Naive thymus-derived CD4-positive, alpha-beta T cell (primary cell): ENCODE measurements at regions of chr9 and their contacts with region 1.

Region 1: DNA sequence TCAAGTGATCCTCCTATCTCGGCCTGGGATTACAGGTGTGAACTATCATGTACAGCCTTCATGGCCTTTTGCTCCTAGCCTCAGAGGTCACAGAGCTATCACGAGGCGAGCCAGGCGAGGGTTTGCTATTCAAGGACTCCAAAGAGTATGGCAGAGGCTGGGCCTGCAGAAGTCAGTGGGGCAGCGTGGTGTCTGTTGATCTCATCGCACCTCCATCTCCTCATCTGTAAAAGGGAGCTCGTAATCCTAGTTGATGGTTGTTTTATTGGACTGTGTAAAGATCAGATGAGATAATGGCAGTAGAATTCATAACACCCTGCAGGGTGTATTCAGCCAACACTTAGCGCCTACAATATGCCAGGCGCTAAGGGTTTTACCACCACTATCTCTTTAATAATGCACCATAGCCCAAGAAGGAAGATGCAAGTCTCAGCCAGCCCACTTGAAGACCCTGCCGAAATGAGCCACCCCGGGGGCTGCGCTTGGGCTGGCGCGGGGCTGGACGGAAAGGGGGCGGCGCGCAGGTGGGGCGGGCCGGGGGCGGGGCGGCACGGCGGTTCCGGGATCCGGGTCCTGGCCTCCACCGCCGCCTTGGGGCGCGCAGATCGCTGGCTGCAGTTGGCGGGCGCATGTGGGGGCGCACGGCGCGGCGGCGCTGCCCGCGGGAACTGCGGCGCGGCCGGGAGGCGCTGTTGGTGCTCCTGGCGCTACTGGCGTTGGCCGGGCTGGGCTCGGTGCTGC is at the start of gene GALNT12:
- DNase-seq: peak; percentile 31 to 60 (median 48)
- ATAC-seq: peak; percentile 87
- H3K4me3 ChIP-seq: peak within 1 kb of the TSS; percentile 56
- H3K4me3 Mint-ChIP-seq: peak within 1 kb of the TSS; percentile 80 to 95 (median 92)
- H3K27ac ChIP-seq: peak within 1 kb of the TSS; percentile 12
- H3K27ac Mint-ChIP-seq: peak within 1 kb of the TSS; percentile 7 to 91 (median 71)
- H3K4me1 ChIP-seq: peaks cover 11 to 16% of the 10 kb centered on the region in 2 donors
- H3K4me1 Mint-ChIP-seq: peaks cover 15 to 42% (median 37%) of the 10 kb centered on the region in 7 donors
- H3K27me3 ChIP-seq: no peaks in the 10 kb centered on the region
- H3K27me3 Mint-ChIP-seq: peaks cover 0 to 52% (median 0%) of the 10 kb centered on the region in 5 donors
- total RNA-seq, gene GALNT12: 6.2 to 14.3 (median 11.4) TPM

Region 2: GRCh38 chr9:97890038-97890437 is 917.2 kb before region 1 on chr9:
- CTCF ChIA-PET with region 1: no interaction called
- POLR2A ChIA-PET with region 1: no interaction called
- intact Hi-C with region 1: no loop called
- DNase-seq: peak; percentile 40 to 73 (median 57)
- ATAC-seq: peak; percentile 88
- H3K4me3 ChIP-seq: no peak overlapping the region
- H3K4me3 Mint-ChIP-seq: peak overlapping the region in 1 of 10 donors; percentile 51
- H3K27ac ChIP-seq: no peak overlapping the region
- H3K27ac Mint-ChIP-seq: peak overlapping the region in 5 of 9 donors; percentile 28 to 81 (median 68)
- H3K4me1 ChIP-seq: peaks cover 0 to 4% of the 10 kb centered on the region in 2 donors
- H3K4me1 Mint-ChIP-seq: peaks cover 6 to 23% (median 18%) of the 10 kb centered on the region in 7 donors
- H3K27me3 ChIP-seq: no peaks in the 10 kb centered on the region
- H3K27me3 Mint-ChIP-seq: no peaks in the 10 kb centered on the region

Region 3: GRCh38 chr9:98766586-98766985 is 40.7 kb before region 1 on chr9:
- CTCF ChIA-PET with region 1: no interaction called
- POLR2A ChIA-PET with region 1: no interaction called
- intact Hi-C with region 1: no loop called
- DNase-seq: peak in 1 of 9 donors; percentile 2
- ATAC-seq: peak; percentile 26
- H3K4me3 ChIP-seq: no peak overlapping the region
- H3K4me3 Mint-ChIP-seq: no peak overlapping the region
- H3K27ac ChIP-seq: no peak overlapping the region
- H3K27ac Mint-ChIP-seq: no peak overlapping the region
- H3K4me1 ChIP-seq: no peaks in the 10 kb centered on the region
- H3K4me1 Mint-ChIP-seq: no peaks in the 10 kb centered on the region
- H3K27me3 ChIP-seq: no peaks in the 10 kb centered on the region
- H3K27me3 Mint-ChIP-seq: no peaks in the 10 kb centered on the region

Region 4: GRCh38 chr9:98796364-98797101 is 10.7 kb before region 1 on chr9 and contains the start of gene ANKS6:
- CTCF ChIA-PET with region 1: interaction called, 4 read pairs
- POLR2A ChIA-PET with region 1: interaction called, 8 read pairs
- intact Hi-C with region 1: loop called (anchors 1 kb)
- DNase-seq: peak; percentile 67 to 95 (median 84)
- ATAC-seq: peak; percentile 98
- H3K4me3 ChIP-seq: peak within 1 kb of the TSS; percentile 87
- H3K4me3 Mint-ChIP-seq: peak within 1 kb of the TSS; percentile 87 to 94 (median 90)
- H3K27ac ChIP-seq: peak within 1 kb of the TSS; percentile 74
- H3K27ac Mint-ChIP-seq: peak within 1 kb of the TSS; percentile 63 to 90 (median 87)
- H3K4me1 ChIP-seq: peaks cover 6 to 12% of the 10 kb centered on the region in 2 donors
- H3K4me1 Mint-ChIP-seq: peaks cover 21 to 37% (median 32%) of the 10 kb centered on the region in 7 donors
- H3K27me3 ChIP-seq: no peaks in the 10 kb centered on the region
- H3K27me3 Mint-ChIP-seq: peaks cover 0 to 23% (median 0%) of the 10 kb centered on the region in 5 donors
- total RNA-seq, gene ANKS6: 8.1 to 18.4 (median 13.5) TPM

Region 5: DNA sequence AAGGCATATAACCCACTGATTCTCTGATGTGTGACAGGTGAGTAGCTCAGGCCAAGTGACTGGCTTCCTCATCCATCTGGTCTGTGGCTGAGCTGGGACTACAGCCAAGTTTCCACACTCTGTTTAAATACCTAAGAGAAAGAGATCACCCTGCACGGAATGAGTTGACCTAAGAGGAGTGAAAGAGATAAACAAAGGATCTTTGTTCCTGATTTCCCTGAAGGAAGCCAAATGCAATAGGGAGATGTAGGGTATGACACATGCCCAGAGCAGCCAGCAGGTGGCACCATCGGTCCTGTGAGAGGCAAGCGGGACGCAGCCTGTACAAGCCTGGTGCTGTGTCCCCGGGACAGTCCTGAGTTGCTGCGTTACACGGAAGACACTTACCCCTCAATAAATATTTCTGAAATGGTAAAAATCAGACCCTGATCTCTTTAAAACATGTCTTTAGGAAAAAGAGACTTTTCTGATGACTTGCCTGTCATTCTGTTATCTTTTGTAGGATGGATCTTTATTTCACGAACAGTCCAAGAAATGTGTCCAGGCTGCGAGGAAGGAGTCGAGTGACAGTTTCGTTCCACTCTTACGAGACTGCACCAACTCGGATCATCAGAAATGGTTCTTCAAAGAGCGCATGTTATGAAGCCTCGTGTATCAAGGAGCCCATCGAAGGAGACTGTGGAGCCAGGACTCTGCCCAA is 41.4 kb after region 1 on chr9:
- CTCF ChIA-PET with region 1: interaction called, 4 read pairs
- POLR2A ChIA-PET with region 1: no interaction called
- intact Hi-C with region 1: loop called in 1 of 2 experiments (anchors 5 kb)
- DNase-seq: peak; percentile 26 to 74 (median 55)
- ATAC-seq: peak; percentile 95
- H3K4me3 ChIP-seq: no peak overlapping the region
- H3K4me3 Mint-ChIP-seq: no peak overlapping the region
- H3K27ac ChIP-seq: no peak overlapping the region
- H3K27ac Mint-ChIP-seq: peak overlapping the region in 4 of 9 donors; percentile 3 to 64 (median 38)
- H3K4me1 ChIP-seq: no peaks in the 10 kb centered on the region
- H3K4me1 Mint-ChIP-seq: peaks cover 0 to 15% (median 4%) of the 10 kb centered on the region in 7 donors
- H3K27me3 ChIP-seq: no peaks in the 10 kb centered on the region
- H3K27me3 Mint-ChIP-seq: no peaks in the 10 kb centered on the region

Region 6: DNA sequence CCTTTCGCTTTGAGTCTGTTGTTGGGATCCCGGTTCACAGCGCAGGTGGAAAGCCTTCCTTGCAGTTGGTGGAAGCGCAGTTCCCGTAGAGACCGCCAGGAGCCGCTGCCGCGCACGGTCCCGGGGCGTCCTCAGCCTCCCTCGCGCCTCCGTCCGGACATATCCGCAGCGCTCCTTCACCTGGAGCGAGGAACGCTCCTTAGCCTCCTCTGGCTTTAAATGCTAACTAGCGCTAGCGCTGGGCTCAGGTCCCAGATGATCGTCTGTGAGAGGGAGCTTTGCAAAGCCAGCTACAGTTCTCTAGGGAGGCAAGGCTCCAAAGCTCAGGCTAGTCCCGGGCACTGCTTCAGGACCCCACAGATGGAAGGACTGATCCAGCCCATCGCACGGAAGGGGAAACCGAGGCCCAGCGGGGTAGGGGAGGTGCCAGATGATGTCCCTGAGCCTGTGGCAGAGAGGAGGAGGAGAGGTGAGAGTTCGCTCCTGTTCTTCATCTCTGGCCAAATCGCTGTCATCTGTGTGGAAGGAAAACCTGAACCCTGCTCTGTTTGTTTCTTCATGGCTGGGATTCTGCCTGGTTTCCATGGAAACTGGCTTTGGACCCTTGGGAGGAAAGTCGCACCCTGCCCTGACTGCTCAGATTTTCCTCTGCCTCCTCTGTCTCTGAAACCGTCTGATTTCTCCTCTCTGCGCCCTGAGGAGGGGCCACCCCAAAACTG is 167.9 kb after region 1 on chr9:
- CTCF ChIA-PET with region 1: no interaction called
- POLR2A ChIA-PET with region 1: no interaction called
- intact Hi-C with region 1: loop called in 1 of 2 experiments (anchors 1 kb)
- DNase-seq: peak; percentile 55 to 86 (median 75)
- ATAC-seq: peak; percentile 94
- H3K4me3 ChIP-seq: peak overlapping the region; percentile 40
- H3K4me3 Mint-ChIP-seq: peak overlapping the region in 9 of 10 donors; percentile 40 to 75 (median 59)
- H3K27ac ChIP-seq: no peak overlapping the region
- H3K27ac Mint-ChIP-seq: no peak overlapping the region
- H3K4me1 ChIP-seq: no peaks in the 10 kb centered on the region
- H3K4me1 Mint-ChIP-seq: peaks cover 0 to 16% (median 5%) of the 10 kb centered on the region in 7 donors
- H3K27me3 ChIP-seq: no peaks in the 10 kb centered on the region
- H3K27me3 Mint-ChIP-seq: peaks cover 0 to 33% (median 10%) of the 10 kb centered on the region in 5 donors